ENCODE measurements at regions of chr9 and their contacts with region 1.

Region 1: GRCh38 chr9:91949946-91950664 is at the start of gene ROR2:
- DNase-seq: peak; percentile 63
- ATAC-seq: peak; percentile 79
- H3K4me3 ChIP-seq: peak within 1 kb of the TSS; percentile 71
- H3K27ac ChIP-seq: peak within 1 kb of the TSS; percentile 76
- H3K4me1 ChIP-seq: peaks cover 17% of the 10 kb centered on the region
- H3K27me3 ChIP-seq: no peaks in the 10 kb centered on the region; the same call in 1 of the 2 replicates
- CTCF ChIP-seq: peak; percentile 78
- POLR2A ChIP-seq: no peak
- RAD21 ChIP-seq: peak; percentile 64
- total RNA-seq, gene ROR2: 2.2 and 2.3 TPM in 2 replicates

Region 2: DNA sequence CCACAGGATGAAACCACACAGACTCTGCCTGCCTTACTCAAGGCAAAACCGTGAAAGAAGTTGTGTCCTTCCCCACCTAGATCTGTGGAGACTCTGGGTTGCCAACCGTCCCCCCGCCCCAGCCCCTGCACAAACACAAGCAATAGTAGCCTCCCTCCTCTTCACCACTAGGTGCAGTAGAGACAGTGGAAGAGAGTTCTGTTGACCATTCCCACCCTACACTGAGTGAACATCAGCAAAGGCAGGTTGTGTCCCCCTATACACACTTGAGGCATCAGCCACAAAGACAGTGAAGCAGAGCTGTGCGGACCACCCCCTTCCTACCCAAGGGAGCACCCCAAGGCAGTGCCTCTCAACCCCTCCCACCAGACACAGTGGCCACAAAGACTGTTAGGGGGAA is 302.7 kb before region 1 on chr9:
- CTCF ChIA-PET with region 1: no interaction called
- POLR2A ChIA-PET with region 1: no interaction called
- dilution Hi-C with region 1: no loop called
- in situ Hi-C with region 1: no loop called
- intact Hi-C with region 1: no loop called
- DNase-seq: no peak
- ATAC-seq: no peak
- H3K4me3 ChIP-seq: no peak overlapping the region
- H3K27ac ChIP-seq: no peak overlapping the region
- H3K4me1 ChIP-seq: peaks cover 2% of the 10 kb centered on the region; the same call in 1 of the 2 replicates
- H3K27me3 ChIP-seq: peaks cover 6% of the 10 kb centered on the region
- CTCF ChIP-seq: no peak
- POLR2A ChIP-seq: no peak
- RAD21 ChIP-seq: no peak

Region 3: DNA sequence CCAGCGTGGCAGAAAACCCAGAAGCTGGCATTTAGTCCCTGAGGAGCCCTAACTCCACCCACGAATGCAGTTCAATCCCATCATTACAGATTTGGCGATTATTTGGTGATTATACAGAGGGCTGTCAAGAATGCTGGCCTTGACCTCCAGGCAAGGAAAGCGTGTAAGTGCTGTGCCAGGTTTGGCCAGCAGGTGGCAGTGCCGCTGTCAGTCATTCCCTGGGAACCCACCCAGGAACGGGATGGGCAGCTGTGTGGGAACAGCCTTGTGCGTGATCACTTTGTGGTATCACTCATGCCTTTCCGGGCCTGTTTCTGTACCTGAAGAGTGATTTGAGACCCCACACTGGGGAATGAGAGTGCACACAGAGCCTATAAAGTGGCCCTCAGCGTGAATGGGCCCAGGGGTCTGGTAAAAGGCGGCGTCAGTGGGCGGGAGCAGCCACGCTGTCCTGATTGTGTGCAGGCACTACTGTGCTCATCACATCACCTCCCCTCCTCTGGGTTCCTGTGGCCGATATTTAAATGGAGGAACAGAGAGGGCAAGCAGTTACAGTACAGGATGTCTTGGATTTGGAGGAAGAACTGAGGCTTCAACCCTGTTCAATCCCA is 215.6 kb before region 1 on chr9:
- CTCF ChIA-PET with region 1: no interaction called
- POLR2A ChIA-PET with region 1: no interaction called
- dilution Hi-C with region 1: no loop called
- in situ Hi-C with region 1: no loop called
- intact Hi-C with region 1: loop called (anchors 2 kb)
- DNase-seq: peak; percentile 58
- ATAC-seq: peak; percentile 95
- H3K4me3 ChIP-seq: no peak overlapping the region
- H3K27ac ChIP-seq: no peak overlapping the region
- H3K4me1 ChIP-seq: peaks cover 2% of the 10 kb centered on the region; the same call in 1 of the 2 replicates
- H3K27me3 ChIP-seq: no peaks in the 10 kb centered on the region
- CTCF ChIP-seq: peak; percentile 90
- POLR2A ChIP-seq: no peak
- RAD21 ChIP-seq: peak; percentile 70

Region 4: DNA sequence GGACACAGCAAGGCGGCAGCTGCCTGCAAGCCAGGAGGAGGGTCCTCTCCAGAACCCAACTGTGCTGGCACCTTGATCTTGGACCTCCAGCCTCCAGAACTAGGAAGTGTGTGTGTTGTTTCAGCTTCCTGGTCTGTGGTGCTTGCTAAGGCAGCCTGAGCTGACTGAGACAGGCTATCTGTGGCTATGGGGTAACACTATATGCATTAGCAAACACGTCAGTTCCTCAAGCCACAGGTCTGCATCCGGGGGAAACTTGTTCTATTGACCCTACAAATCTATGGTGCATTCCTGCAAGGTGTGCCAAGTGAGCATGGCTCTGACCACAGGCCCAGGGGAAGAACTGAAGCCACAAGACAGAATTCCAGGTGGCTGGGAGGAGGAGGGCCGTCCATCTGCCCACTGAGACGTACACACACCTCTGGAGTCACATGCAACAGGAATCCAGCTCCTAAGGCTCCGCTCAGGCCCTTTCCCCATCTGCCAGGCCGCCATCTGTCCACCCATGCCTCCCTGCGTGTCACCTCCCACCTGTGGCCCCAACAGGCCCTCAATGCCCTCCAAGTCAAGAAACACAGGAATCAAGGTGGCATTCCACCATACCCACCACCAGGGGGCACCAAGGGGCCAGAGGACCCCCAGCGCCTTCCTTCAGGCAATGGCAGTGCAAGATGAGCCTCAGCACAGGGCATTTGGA is 174.9 kb before region 1 on chr9:
- CTCF ChIA-PET with region 1: interaction called, 10 read pairs
- POLR2A ChIA-PET with region 1: interaction called, 3 read pairs
- dilution Hi-C with region 1: no loop called
- in situ Hi-C with region 1: loop called (anchors 10 kb)
- intact Hi-C with region 1: loop called (anchors 1 kb)
- DNase-seq: peak; percentile 58
- ATAC-seq: peak; percentile 18
- H3K4me3 ChIP-seq: no peak overlapping the region
- H3K27ac ChIP-seq: no peak overlapping the region
- H3K4me1 ChIP-seq: peaks cover 34% of the 10 kb centered on the region
- H3K27me3 ChIP-seq: no peaks in the 10 kb centered on the region
- CTCF ChIP-seq: peak; percentile 77
- POLR2A ChIP-seq: peak; percentile 41; the same call in 1 of the 2 replicates
- RAD21 ChIP-seq: peak; percentile 94

Region 5: GRCh38 chr9:91898451-91899218 is 51.5 kb before region 1 on chr9:
- CTCF ChIA-PET with region 1: no interaction called
- POLR2A ChIA-PET with region 1: interaction called, 3 read pairs
- dilution Hi-C with region 1: no loop called
- in situ Hi-C with region 1: no loop called
- intact Hi-C with region 1: loop called (anchors 5 kb)
- DNase-seq: peak; percentile 50
- ATAC-seq: peak; percentile 43
- H3K4me3 ChIP-seq: no peak overlapping the region
- H3K27ac ChIP-seq: peak overlapping the region; percentile 7; the same call in 1 of the 2 replicates
- H3K4me1 ChIP-seq: peaks cover 27% of the 10 kb centered on the region
- H3K27me3 ChIP-seq: no peaks in the 10 kb centered on the region
- CTCF ChIP-seq: no peak
- POLR2A ChIP-seq: no peak
- RAD21 ChIP-seq: no peak

Region 6: GRCh38 chr9:91927922-91928510 is 22.1 kb before region 1 on chr9:
- CTCF ChIA-PET with region 1: no interaction called
- POLR2A ChIA-PET with region 1: no interaction called
- dilution Hi-C with region 1: no loop called
- in situ Hi-C with region 1: no loop called
- intact Hi-C with region 1: no loop called
- DNase-seq: no peak
- ATAC-seq: no peak
- H3K4me3 ChIP-seq: no peak overlapping the region
- H3K27ac ChIP-seq: no peak overlapping the region
- H3K4me1 ChIP-seq: peaks cover 2% of the 10 kb centered on the region; the same call in 1 of the 2 replicates
- H3K27me3 ChIP-seq: no peaks in the 10 kb centered on the region
- CTCF ChIP-seq: no peak
- POLR2A ChIP-seq: no peak
- RAD21 ChIP-seq: no peak

Region 7: GRCh38 chr9:92010705-92011536 is 60.8 kb after region 1 on chr9:
- CTCF ChIA-PET with region 1: no interaction called
- POLR2A ChIA-PET with region 1: no interaction called
- dilution Hi-C with region 1: no loop called
- in situ Hi-C with region 1: no loop called
- intact Hi-C with region 1: no loop called
- DNase-seq: no peak
- ATAC-seq: peak; percentile 54
- H3K4me3 ChIP-seq: no peak overlapping the region
- H3K27ac ChIP-seq: no peak overlapping the region
- H3K4me1 ChIP-seq: peaks cover 3% of the 10 kb centered on the region; the same call in 1 of the 2 replicates
- H3K27me3 ChIP-seq: no peaks in the 10 kb centered on the region
- CTCF ChIP-seq: no peak
- POLR2A ChIP-seq: no peak
- RAD21 ChIP-seq: no peak

Region 8: DNA sequence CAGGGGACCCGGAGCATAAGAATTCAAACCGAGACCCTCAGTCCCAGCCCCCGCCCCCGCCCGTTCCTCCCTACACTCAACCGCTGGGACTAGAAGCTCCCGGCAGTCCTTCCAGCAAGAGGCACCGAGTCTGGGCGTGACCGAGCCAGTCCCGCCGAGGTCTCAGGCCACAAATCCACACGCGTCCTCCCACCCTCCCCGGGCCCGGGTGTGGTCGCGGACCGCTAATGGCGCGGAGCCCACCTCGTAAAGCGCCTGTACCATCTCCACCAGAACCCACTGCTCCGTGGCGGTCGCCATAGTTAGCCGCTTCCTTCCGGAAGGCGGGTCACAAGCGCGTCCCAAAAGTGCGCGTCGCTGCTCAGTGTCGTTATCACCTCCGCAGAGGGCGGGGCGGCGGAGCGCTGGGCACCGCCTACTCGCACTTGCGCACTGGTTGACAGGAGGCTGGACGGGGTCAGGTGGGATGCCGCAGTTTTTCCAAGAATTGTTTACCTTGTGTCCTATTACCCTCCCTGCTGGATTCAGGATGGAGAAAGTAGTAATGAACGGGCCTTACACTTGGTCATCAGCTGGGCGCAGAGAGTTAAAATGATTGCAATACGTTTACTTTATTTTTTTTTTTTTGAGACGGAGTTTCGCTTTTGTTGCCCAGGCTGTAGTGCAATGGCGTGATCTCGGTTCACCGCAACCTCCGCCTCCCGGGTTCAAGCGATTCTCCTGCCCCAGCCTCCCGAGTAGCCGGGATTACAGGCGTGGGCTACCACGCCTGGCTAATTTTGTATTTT is 165.2 kb after region 1 on chr9 and contains the start of gene SPTLC1:
- CTCF ChIA-PET with region 1: interaction called, 3 read pairs
- POLR2A ChIA-PET with region 1: no interaction called
- dilution Hi-C with region 1: no loop called
- in situ Hi-C with region 1: no loop called
- intact Hi-C with region 1: loop called (anchors 2 kb)
- DNase-seq: peak; percentile 93
- ATAC-seq: peak; percentile 100
- H3K4me3 ChIP-seq: peak within 1 kb of the TSS; percentile 80
- H3K27ac ChIP-seq: peak within 1 kb of the TSS; percentile 91
- H3K4me1 ChIP-seq: no peaks in the 10 kb centered on the region; the same call in 1 of the 2 replicates
- H3K27me3 ChIP-seq: no peaks in the 10 kb centered on the region
- CTCF ChIP-seq: no peak
- POLR2A ChIP-seq: peak; percentile 95
- RAD21 ChIP-seq: no peak
- total RNA-seq, gene SPTLC1: 92.7 and 95.8 TPM in 2 replicates

Measured in IMR-90 (cell line).